ENCODE measurements at regions of chr6 and their contacts with region 1.

Region 1: GRCh38 chr6:131683479-131683878 is 17.7 kb downstream of the OR2A4 start:
- DNase-seq: peak; percentile 22
- H3K4me3 Mint-ChIP-seq: no peak overlapping the region
- H3K27ac Mint-ChIP-seq: peak overlapping the region; percentile 65
- H3K4me1 Mint-ChIP-seq: peaks cover 50% of the 10 kb centered on the region
- H3K27me3 Mint-ChIP-seq: no peaks in the 10 kb centered on the region

Region 2: GRCh38 chr6:131615275-131615674 is 68.2 kb before region 1 on chr6:
- intact Hi-C with region 1: no loop called
- DNase-seq: no peak
- H3K4me3 Mint-ChIP-seq: no peak overlapping the region
- H3K27ac Mint-ChIP-seq: no peak overlapping the region
- H3K4me1 Mint-ChIP-seq: peaks cover 17% of the 10 kb centered on the region
- H3K27me3 Mint-ChIP-seq: no peaks in the 10 kb centered on the region

Region 3: GRCh38 chr6:131657630-131658111 is 25.8 kb before region 1 on chr6:
- intact Hi-C with region 1: loop called (anchors 2 kb)
- DNase-seq: no peak
- H3K4me3 Mint-ChIP-seq: no peak overlapping the region
- H3K27ac Mint-ChIP-seq: no peak overlapping the region
- H3K4me1 Mint-ChIP-seq: peaks cover 31% of the 10 kb centered on the region
- H3K27me3 Mint-ChIP-seq: no peaks in the 10 kb centered on the region

Region 4: DNA sequence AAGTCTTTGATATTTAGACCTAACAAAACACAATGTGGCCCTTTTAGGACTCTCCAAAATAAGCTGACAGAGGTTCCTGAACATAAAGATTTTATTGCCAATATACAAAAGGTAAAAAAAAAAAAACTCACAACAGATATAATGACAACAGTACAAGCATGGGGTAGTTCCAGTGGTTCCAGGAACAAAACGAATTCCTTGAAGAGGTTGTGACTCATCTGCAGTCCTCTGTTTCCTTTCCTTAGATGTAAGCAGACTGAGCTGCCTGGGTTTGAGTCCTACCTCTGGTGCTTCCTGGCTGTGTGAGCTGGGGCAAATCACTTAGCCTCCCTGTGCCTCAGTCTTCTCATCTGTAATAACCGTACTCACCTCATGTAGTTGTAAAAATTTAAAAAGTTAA is 40.6 kb after region 1 on chr6:
- intact Hi-C with region 1: no loop called
- DNase-seq: no peak
- H3K4me3 Mint-ChIP-seq: no peak overlapping the region
- H3K27ac Mint-ChIP-seq: no peak overlapping the region
- H3K4me1 Mint-ChIP-seq: peaks cover 13% of the 10 kb centered on the region
- H3K27me3 Mint-ChIP-seq: no peaks in the 10 kb centered on the region

Region 5: GRCh38 chr6:131787766-131788712 is 104.6 kb after region 1 on chr6:
- intact Hi-C with region 1: loop called (anchors 1 kb)
- DNase-seq: no peak
- H3K4me3 Mint-ChIP-seq: no peak overlapping the region
- H3K27ac Mint-ChIP-seq: no peak overlapping the region
- H3K4me1 Mint-ChIP-seq: peaks cover 37% of the 10 kb centered on the region
- H3K27me3 Mint-ChIP-seq: no peaks in the 10 kb centered on the region

Region 6: GRCh38 chr6:131894735-131895424 is 211.4 kb after region 1 on chr6:
- intact Hi-C with region 1: loop called (anchors 1 kb)
- DNase-seq: peak; percentile 16
- H3K4me3 Mint-ChIP-seq: no peak overlapping the region
- H3K27ac Mint-ChIP-seq: peak overlapping the region; percentile 38
- H3K4me1 Mint-ChIP-seq: peaks cover 20% of the 10 kb centered on the region
- H3K27me3 Mint-ChIP-seq: peaks cover 4% of the 10 kb centered on the region

Region 7: DNA sequence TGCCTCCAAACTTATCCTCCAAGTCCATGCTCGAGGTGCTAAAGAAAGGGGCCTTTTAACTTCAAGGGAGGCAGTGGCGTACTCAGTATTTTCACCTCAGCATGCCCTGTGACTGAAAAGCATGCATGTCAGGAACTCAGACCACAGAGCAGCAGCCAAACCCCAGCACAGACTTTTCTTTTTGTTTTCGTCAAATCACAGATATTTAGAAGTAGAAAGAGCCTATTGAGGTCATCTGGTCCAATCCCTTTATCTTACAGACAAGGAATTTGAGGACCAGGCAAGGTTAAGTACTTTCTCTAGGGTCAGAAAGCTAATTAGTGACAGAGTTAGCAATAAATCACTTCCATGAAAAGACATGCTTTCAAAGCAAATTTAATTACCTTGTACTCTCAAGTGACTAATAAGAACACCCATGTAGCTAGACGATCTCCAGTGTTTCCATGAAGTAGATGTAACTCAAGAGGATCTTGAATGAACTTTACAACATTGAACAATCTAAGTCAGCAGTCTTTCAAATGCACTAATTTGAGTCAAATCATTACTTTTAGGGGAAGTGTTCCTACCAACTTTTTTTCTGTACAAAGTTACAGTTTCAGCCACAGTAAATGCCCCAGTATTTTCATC is 681.9 kb after region 1 on chr6:
- intact Hi-C with region 1: loop called (anchors 5 kb)
- DNase-seq: no peak
- H3K4me3 Mint-ChIP-seq: no peak overlapping the region
- H3K27ac Mint-ChIP-seq: peak overlapping the region; percentile 38
- H3K4me1 Mint-ChIP-seq: peaks cover 17% of the 10 kb centered on the region
- H3K27me3 Mint-ChIP-seq: peaks cover 42% of the 10 kb centered on the region

Measured in activated T-helper 2 cell treated with anti-CD3 and anti-CD28 coated beads, Interferon-gamma antibody, Interleukin-2, Interleukin-4, amounts not matched to agents 10 μg/mL and 5 μg/mL and 100 μg/mL, durations not matched to agents 14 hours and 24 hours and 36 hours (primary cell).